ENCODE measurements at regions of chr2 and their contacts with region 1.

Region 1: GRCh38 chr2:112481050-112481527 is 867 bp upstream of the TTL start:
- DNase-seq: peak; percentile 77
- H3K4me3 ChIP-seq: peak overlapping the region; percentile 60 to 78
- H3K27ac ChIP-seq: peak overlapping the region; percentile 79 to 89
- H3K4me1 ChIP-seq: no peaks in the 10 kb centered on the region
- H3K27me3 ChIP-seq: no peaks in the 10 kb centered on the region
- CTCF ChIP-seq: peak in 3 of 4 experiments; percentile 53 to 76 (median 73)
- POLR2A ChIP-seq: no peak

Region 2: DNA sequence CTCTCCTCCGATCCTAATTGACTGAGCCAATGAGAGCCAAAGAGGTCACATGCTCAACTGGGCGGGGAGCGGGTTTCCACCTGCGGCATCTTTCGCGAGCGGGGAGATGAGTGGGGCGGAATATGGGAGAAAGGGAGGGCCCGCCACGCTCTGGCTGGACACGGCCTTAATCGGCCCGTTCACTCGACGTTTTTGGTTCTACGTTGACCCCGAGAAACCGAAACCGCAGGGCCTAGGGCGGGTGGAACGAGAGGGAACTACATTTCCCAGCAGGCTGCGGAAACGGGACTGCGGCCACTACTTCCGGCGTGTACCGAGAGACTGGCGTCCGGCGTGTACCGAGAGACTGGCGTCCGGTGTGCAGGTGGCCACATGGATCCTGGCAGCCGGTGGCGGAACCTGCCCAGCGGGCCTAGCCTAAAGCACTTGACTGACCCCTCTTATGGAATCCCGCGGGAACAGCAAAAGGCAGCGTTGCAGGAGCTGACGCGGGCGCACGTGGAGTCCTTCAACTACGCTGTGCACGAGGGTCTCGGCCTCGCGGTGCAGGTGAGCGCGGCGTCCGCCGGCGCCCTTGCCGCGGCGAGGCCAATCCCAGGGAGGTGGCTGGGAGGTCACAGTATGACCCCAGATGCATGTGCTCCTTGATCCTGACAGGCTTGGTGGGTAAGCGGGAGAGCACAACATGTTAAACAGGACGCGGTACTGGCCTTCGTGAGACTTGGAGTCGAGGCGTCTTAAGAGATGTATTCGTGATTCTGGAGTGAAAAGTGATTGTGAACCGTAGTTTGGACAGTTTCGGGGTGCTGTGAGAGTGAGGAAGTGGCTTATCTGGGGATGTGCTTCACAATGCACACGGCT is 61.3 kb after region 1 on chr2 and contains the start of gene POLR1B:
- intact Hi-C with region 1: loop called (anchors 2 kb)
- DNase-seq: peak; percentile 80
- H3K4me3 ChIP-seq: peak within 1 kb of the TSS; percentile 60 to 67
- H3K27ac ChIP-seq: peak within 1 kb of the TSS; percentile 86 to 87
- H3K4me1 ChIP-seq: peaks cover 5% of the 10 kb centered on the region
- H3K27me3 ChIP-seq: no peaks in the 10 kb centered on the region
- CTCF ChIP-seq: no peak
- POLR2A ChIP-seq: peak; percentile 18
- total RNA-seq, gene POLR1B: 13.1 to 14.0 TPM

Measured in prostate gland (tissue), 2 donors.